Activated CD4-positive, alpha-beta T cell treated with anti-CD3 and anti-CD28 coated beads, Interleukin-2, amount 10 ng/mL, durations not matched to agents 24 days and 14 days (primary cell): ENCODE measurements at regions of chr5 and their contacts with region 1.

Region 1: GRCh38 chr5:160467555-160468362 is 46.1 kb downstream of the PTTG1 start:
- DNase-seq: peak; percentile 96
- H3K4me3 Mint-ChIP-seq: peak overlapping the region; percentile 100
- H3K27ac Mint-ChIP-seq: peak overlapping the region; percentile 100
- H3K4me1 Mint-ChIP-seq: peaks cover 62% of the 10 kb centered on the region
- H3K27me3 Mint-ChIP-seq: no peaks in the 10 kb centered on the region

Region 2: DNA sequence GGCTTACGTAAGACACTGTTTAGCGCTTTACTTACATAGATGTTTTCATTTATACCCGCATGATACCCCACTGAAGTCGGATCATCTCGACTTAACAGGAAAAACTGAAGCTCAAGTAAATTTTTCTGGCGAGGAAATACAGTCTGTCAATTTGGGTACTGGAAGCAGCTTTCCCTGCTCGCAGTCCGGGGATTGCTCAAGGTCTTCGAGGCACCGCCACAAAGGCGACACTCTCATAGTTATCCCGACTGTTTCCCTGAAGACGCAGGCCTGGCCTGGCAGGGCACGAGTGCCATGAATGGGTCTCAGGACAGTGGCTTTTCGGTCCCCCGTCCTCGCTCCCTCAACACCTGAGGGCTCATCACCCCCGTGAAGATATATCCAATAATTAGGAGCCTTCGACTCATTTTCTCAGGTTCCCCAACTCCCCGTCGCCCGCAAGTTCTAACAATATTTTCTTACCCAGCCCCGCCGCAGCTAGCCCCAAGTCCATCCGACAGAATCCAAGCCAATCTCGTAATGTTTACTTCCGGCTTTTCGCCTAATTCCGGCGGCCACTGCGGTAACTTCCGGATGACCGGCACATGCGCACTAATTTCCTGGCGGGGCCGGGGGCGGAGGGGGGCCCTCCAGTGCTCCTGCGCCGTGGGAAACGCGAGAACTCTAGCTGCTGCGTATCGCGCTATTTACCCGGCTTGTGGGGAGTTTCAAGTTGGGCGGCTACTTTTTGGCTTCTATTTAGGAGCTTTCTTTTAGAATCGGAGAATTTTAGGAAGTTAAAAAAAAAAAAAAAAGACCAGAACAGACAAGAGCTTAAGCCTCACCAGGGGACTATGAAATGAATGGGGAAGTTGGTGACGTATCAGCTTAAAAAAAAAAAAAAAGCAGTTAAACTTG is 49.0 kb before region 1 on chr5 and contains the start of gene SLU7:
- intact Hi-C with region 1: loop called (anchors 1 kb)
- DNase-seq: peak; percentile 98
- H3K4me3 Mint-ChIP-seq: peak within 1 kb of the TSS; percentile 97
- H3K27ac Mint-ChIP-seq: peak within 1 kb of the TSS; percentile 97
- H3K4me1 Mint-ChIP-seq: peaks cover 61% of the 10 kb centered on the region
- H3K27me3 Mint-ChIP-seq: no peaks in the 10 kb centered on the region
- total RNA-seq, gene SLU7: 38.4 and 39.8 TPM in 2 replicates

Region 3: DNA sequence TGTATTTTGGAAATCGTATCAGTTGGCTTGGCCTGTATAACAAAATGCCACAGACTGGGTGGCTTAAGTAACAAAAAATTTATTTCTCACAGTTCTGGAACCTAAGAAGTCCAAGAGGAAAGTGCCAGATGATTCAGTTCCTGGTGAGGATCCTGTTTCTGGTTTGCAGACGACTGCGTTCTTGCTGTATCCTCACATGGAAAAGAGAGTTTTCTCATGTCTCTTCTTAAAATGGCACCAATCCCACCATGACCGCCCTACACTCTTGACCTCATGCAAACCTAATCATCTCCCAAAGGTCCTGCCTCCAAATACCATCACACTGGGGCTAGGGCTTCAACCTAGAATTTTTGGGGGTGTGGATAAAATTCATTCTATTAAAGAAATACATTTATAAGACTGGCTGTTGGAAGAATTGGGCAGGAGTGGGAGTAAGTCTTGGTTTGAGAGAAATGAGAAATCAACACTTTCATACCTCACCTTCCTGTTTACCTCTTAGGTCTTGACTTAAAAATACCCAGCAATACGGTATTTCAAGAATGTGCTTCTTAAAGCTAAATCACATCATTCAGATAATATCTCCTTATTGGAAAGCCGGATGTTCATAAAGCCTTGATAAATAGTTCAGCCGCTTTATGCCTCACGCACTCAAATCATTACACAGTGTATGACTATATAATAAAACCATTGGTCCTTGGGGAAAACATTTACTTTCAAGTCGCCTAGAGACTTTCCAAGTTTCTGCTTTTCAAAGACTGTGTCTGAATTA is 17.4 kb before region 1 on chr5:
- intact Hi-C with region 1: loop called (anchors 1 kb)
- DNase-seq: peak; percentile 40
- H3K4me3 Mint-ChIP-seq: peak overlapping the region; percentile 19
- H3K27ac Mint-ChIP-seq: peak overlapping the region; percentile 37
- H3K4me1 Mint-ChIP-seq: peaks cover 39% of the 10 kb centered on the region
- H3K27me3 Mint-ChIP-seq: no peaks in the 10 kb centered on the region

Region 4: GRCh38 chr5:160496334-160496733 is 28.6 kb after region 1 on chr5:
- intact Hi-C with region 1: loop called (anchors 1 kb)
- DNase-seq: no peak
- H3K4me3 Mint-ChIP-seq: peak overlapping the region; percentile 18
- H3K27ac Mint-ChIP-seq: peak overlapping the region; percentile 70
- H3K4me1 Mint-ChIP-seq: peaks cover 30% of the 10 kb centered on the region
- H3K27me3 Mint-ChIP-seq: no peaks in the 10 kb centered on the region

Region 5: DNA sequence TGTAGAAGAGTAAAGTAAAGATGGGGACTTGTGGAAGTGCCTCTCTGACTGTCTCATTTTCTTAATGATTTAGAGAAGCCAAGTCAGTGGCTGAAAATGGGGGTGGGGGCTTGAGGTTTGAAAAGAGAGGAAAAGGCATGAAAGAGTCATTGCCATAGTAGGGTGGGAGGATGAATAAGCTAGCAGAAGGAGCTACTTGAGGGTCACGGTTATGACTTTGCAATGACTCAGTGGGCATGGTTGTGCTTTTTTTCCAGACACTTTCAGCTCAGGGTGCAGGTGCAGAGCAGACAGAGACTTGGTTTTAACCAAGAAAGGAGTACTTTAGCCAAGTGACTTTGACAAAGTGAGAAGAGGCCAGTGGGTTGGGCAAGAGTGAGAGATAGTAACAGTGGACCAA is 71.7 kb after region 1 on chr5:
- intact Hi-C with region 1: loop called (anchors 1 kb)
- DNase-seq: peak; percentile 64
- H3K4me3 Mint-ChIP-seq: no peak overlapping the region
- H3K27ac Mint-ChIP-seq: no peak overlapping the region
- H3K4me1 Mint-ChIP-seq: peaks cover 9% of the 10 kb centered on the region
- H3K27me3 Mint-ChIP-seq: no peaks in the 10 kb centered on the region